ENCODE measurements at regions of chr12 and their contacts with region 1.

Region 1: GRCh38 chr12:94875525-94875924 is 128.0 kb downstream of the NDUFA12 start:
- DNase-seq: peak; percentile 78
- ATAC-seq: peak; percentile 74
- H3K4me3 ChIP-seq: no peak overlapping the region
- H3K4me3 Mint-ChIP-seq: peak overlapping the region; percentile 27
- H3K27ac ChIP-seq: no peak overlapping the region
- H3K27ac Mint-ChIP-seq: no peak overlapping the region
- H3K4me1 ChIP-seq: peaks cover 32 to 35% of the 10 kb centered on the region in 2 donors
- H3K4me1 Mint-ChIP-seq: peaks cover 37% of the 10 kb centered on the region
- H3K27me3 ChIP-seq: peaks cover 0 to 54% (median 18%) of the 10 kb centered on the region in 4 experiments
- H3K27me3 Mint-ChIP-seq: peaks cover 44% of the 10 kb centered on the region
- CTCF ChIP-seq: peak; percentile 74

Region 2: GRCh38 chr12:94149119-94149780 is 726.3 kb before region 1 on chr12:
- CTCF ChIA-PET with region 1: interaction called, 3 read pairs
- POLR2A ChIA-PET with region 1: no interaction called
- intact Hi-C with region 1: loop called (anchors 5 kb)
- DNase-seq: peak; percentile 87
- ATAC-seq: peak; percentile 36
- H3K4me3 ChIP-seq: peak overlapping the region; percentile 30 to 80 (median 74)
- H3K4me3 Mint-ChIP-seq: peak overlapping the region; percentile 99
- H3K27ac ChIP-seq: peak overlapping the region in 1 of 2 donors; percentile 26
- H3K27ac Mint-ChIP-seq: peak overlapping the region; percentile 84
- H3K4me1 ChIP-seq: peaks cover 25 to 43% of the 10 kb centered on the region in 2 donors
- H3K4me1 Mint-ChIP-seq: peaks cover 63% of the 10 kb centered on the region
- H3K27me3 ChIP-seq: no peaks in the 10 kb centered on the region
- H3K27me3 Mint-ChIP-seq: no peaks in the 10 kb centered on the region
- CTCF ChIP-seq: peak; percentile 67

Region 3: GRCh38 chr12:94372461-94372860 is 503.1 kb before region 1 on chr12:
- CTCF ChIA-PET with region 1: no interaction called
- POLR2A ChIA-PET with region 1: no interaction called
- intact Hi-C with region 1: no loop called
- DNase-seq: peak; percentile 42
- ATAC-seq: no peak
- H3K4me3 ChIP-seq: peak overlapping the region in 1 of 5 experiments; percentile 8
- H3K4me3 Mint-ChIP-seq: peak overlapping the region; percentile 57
- H3K27ac ChIP-seq: peak overlapping the region in 1 of 2 donors; percentile 48
- H3K27ac Mint-ChIP-seq: no peak overlapping the region
- H3K4me1 ChIP-seq: peaks cover 0 to 4% of the 10 kb centered on the region in 2 donors
- H3K4me1 Mint-ChIP-seq: peaks cover 5% of the 10 kb centered on the region
- H3K27me3 ChIP-seq: no peaks in the 10 kb centered on the region
- H3K27me3 Mint-ChIP-seq: no peaks in the 10 kb centered on the region
- CTCF ChIP-seq: no peak

Region 4: DNA sequence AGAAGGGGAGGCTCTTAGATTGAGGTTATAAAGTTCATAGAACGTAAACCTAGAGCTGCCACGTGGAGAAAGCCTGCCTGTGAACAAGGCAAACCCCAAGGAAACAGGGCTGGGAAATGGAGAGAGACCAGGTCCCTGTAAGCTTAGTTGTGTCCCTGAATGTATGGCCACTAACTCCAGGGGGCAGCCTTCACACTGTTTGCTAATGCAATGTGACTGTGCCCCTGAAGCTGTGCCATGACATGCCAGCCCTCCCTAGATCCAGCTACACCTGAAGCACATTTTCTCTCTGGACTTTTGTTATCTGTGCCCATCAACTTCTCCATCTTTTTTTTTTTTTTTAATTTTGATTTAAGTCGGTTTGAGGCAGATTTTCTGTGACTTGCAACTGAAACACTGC is 164.6 kb before region 1 on chr12:
- CTCF ChIA-PET with region 1: interaction called, 68 read pairs
- POLR2A ChIA-PET with region 1: no interaction called
- intact Hi-C with region 1: loop called (anchors 1 kb)
- DNase-seq: peak; percentile 57
- ATAC-seq: peak; percentile 71
- H3K4me3 ChIP-seq: no peak overlapping the region
- H3K4me3 Mint-ChIP-seq: no peak overlapping the region
- H3K27ac ChIP-seq: no peak overlapping the region
- H3K27ac Mint-ChIP-seq: no peak overlapping the region
- H3K4me1 ChIP-seq: peaks cover 8 to 9% of the 10 kb centered on the region in 2 donors
- H3K4me1 Mint-ChIP-seq: peaks cover 21% of the 10 kb centered on the region
- H3K27me3 ChIP-seq: no peaks in the 10 kb centered on the region
- H3K27me3 Mint-ChIP-seq: no peaks in the 10 kb centered on the region
- CTCF ChIP-seq: peak; percentile 57

Region 5: GRCh38 chr12:94762259-94762942 is 113.1 kb before region 1 on chr12:
- CTCF ChIA-PET with region 1: interaction called, 18 read pairs
- POLR2A ChIA-PET with region 1: no interaction called
- intact Hi-C with region 1: no loop called
- DNase-seq: no peak
- ATAC-seq: peak; percentile 23
- H3K4me3 ChIP-seq: peak overlapping the region in 1 of 5 experiments; percentile 13
- H3K4me3 Mint-ChIP-seq: peak overlapping the region; percentile 51
- H3K27ac ChIP-seq: no peak overlapping the region
- H3K27ac Mint-ChIP-seq: no peak overlapping the region
- H3K4me1 ChIP-seq: peaks cover 34 to 39% of the 10 kb centered on the region in 2 donors
- H3K4me1 Mint-ChIP-seq: peaks cover 43% of the 10 kb centered on the region
- H3K27me3 ChIP-seq: no peaks in the 10 kb centered on the region
- H3K27me3 Mint-ChIP-seq: no peaks in the 10 kb centered on the region
- CTCF ChIP-seq: no peak

Region 6: GRCh38 chr12:94817695-94818075 is 57.8 kb before region 1 on chr12:
- CTCF ChIA-PET with region 1: interaction called, 108 read pairs
- POLR2A ChIA-PET with region 1: interaction called, 3 read pairs
- intact Hi-C with region 1: loop called (anchors 2 kb)
- DNase-seq: no peak
- ATAC-seq: no peak
- H3K4me3 ChIP-seq: peak overlapping the region; percentile 39 to 66 (median 51)
- H3K4me3 Mint-ChIP-seq: peak overlapping the region; percentile 83
- H3K27ac ChIP-seq: peak overlapping the region; percentile 86 to 90
- H3K27ac Mint-ChIP-seq: peak overlapping the region; percentile 95
- H3K4me1 ChIP-seq: peaks cover 60 to 62% of the 10 kb centered on the region in 2 donors
- H3K4me1 Mint-ChIP-seq: peaks cover 61% of the 10 kb centered on the region
- H3K27me3 ChIP-seq: no peaks in the 10 kb centered on the region
- H3K27me3 Mint-ChIP-seq: no peaks in the 10 kb centered on the region
- CTCF ChIP-seq: no peak

Region 7: GRCh38 chr12:94864987-94865386 is 10.5 kb before region 1 on chr12:
- CTCF ChIA-PET with region 1: interaction called, 13 read pairs
- POLR2A ChIA-PET with region 1: no interaction called
- intact Hi-C with region 1: no loop called
- DNase-seq: no peak
- ATAC-seq: no peak
- H3K4me3 ChIP-seq: no peak overlapping the region
- H3K4me3 Mint-ChIP-seq: no peak overlapping the region
- H3K27ac ChIP-seq: no peak overlapping the region
- H3K27ac Mint-ChIP-seq: no peak overlapping the region
- H3K4me1 ChIP-seq: no peaks in the 10 kb centered on the region
- H3K4me1 Mint-ChIP-seq: no peaks in the 10 kb centered on the region
- H3K27me3 ChIP-seq: no peaks in the 10 kb centered on the region
- H3K27me3 Mint-ChIP-seq: no peaks in the 10 kb centered on the region
- CTCF ChIP-seq: no peak

Region 8: GRCh38 chr12:94922561-94922960 is 47.0 kb after region 1 on chr12:
- CTCF ChIA-PET with region 1: no interaction called
- POLR2A ChIA-PET with region 1: no interaction called
- intact Hi-C with region 1: no loop called
- DNase-seq: no peak
- ATAC-seq: no peak
- H3K4me3 ChIP-seq: no peak overlapping the region
- H3K4me3 Mint-ChIP-seq: no peak overlapping the region
- H3K27ac ChIP-seq: no peak overlapping the region
- H3K27ac Mint-ChIP-seq: no peak overlapping the region
- H3K4me1 ChIP-seq: peaks cover 0 to 2% of the 10 kb centered on the region in 2 donors
- H3K4me1 Mint-ChIP-seq: peaks cover 10% of the 10 kb centered on the region
- H3K27me3 ChIP-seq: no peaks in the 10 kb centered on the region
- H3K27me3 Mint-ChIP-seq: no peaks in the 10 kb centered on the region
- CTCF ChIP-seq: no peak